Mammary epithelial cell (primary cell): ENCODE measurements at regions of chr3 and their contacts with region 1.

Region 1: DNA sequence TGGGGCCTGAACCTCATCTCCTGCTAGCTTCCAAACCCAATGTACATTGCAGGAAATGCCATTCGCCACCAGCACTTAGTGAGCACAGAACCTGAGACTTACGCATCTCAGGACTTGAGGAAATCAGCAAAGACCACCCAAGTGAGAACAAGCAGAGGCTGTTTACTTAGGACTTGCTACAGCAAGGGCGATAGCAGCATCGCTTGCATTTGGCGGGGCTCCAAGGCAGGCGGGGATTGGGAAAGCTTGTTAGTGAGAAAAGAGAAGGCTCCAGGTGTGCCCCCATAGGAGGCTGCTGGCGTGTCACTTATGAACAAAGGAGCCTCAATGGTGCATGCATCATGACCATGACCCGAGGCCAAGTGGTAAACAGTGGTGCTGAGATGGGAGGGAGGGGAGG is 19.7 kb downstream of the SLC6A20 start:
- DNase-seq: no peak
- H3K4me3 ChIP-seq: no peak overlapping the region
- H3K27ac ChIP-seq: no peak overlapping the region
- H3K4me1 ChIP-seq: no peaks in the 10 kb centered on the region
- H3K27me3 ChIP-seq: no peaks in the 10 kb centered on the region
- CTCF ChIP-seq: no peak

Region 2: DNA sequence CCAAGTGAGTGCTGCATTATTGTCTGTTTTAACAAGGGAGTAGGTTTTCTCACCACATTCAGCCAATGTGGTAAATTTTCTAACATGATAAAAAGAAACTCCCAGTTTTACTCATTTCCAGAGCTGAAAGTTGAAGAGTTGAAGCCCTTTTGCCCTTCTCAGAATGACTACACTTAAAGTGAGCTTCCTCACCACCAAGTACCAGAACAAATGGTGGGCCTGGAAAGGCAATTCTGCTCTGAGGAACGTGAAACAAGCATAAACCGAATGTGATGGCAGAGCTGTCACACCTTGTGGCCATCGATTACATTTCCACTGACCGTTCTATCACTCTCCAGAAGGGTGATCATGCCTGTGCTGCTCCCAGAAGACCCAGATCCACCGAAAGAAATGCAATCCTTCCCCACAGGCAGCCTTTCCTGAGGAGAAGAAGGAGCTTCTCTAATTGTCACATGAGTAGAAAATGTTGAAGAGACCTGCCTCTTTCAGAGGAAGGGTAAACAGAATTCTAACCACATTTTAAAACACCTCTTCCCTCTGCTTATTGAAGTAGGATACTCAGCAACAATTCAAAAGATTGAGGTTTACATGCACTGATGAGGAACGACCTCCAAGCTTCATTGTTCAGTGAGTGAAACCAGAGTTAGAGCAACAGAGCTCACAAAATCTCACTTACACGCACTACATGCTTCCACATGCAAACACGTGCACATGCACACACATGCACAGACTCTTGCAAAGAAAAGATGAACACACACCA is 88.3 kb after region 1 on chr3:
- CTCF ChIA-PET with region 1: no interaction called
- dilution Hi-C with region 1: loop called (anchors 5 kb)
- in situ Hi-C with region 1: no loop called
- intact Hi-C with region 1: no loop called
- DNase-seq: no peak
- H3K4me3 ChIP-seq: no peak overlapping the region
- H3K27ac ChIP-seq: no peak overlapping the region
- H3K4me1 ChIP-seq: no peaks in the 10 kb centered on the region
- H3K27me3 ChIP-seq: no peaks in the 10 kb centered on the region
- CTCF ChIP-seq: no peak